Posterior cingulate gyrus (tissue), 11 donors: ENCODE measurements at regions of chr15 and their contacts with region 1.

Region 1: GRCh38 chr15:80058851-80059785 is at the start of gene ZFAND6:
- DNase-seq: peak; percentile 91 to 99 (median 95)

Region 2: GRCh38 chr15:79896637-79897379 is 162.3 kb before region 1 on chr15 and contains the start of gene MTHFS:
- intact Hi-C with region 1: loop called (anchors 10 kb)
- DNase-seq: peak; percentile 43 to 92 (median 60)

Region 3: GRCh38 chr15:80152180-80152845 is 93.2 kb after region 1 on chr15:
- intact Hi-C with region 1: loop called (anchors 5 kb)
- DNase-seq: peak; percentile 51 to 94 (median 76)

Region 4: DNA sequence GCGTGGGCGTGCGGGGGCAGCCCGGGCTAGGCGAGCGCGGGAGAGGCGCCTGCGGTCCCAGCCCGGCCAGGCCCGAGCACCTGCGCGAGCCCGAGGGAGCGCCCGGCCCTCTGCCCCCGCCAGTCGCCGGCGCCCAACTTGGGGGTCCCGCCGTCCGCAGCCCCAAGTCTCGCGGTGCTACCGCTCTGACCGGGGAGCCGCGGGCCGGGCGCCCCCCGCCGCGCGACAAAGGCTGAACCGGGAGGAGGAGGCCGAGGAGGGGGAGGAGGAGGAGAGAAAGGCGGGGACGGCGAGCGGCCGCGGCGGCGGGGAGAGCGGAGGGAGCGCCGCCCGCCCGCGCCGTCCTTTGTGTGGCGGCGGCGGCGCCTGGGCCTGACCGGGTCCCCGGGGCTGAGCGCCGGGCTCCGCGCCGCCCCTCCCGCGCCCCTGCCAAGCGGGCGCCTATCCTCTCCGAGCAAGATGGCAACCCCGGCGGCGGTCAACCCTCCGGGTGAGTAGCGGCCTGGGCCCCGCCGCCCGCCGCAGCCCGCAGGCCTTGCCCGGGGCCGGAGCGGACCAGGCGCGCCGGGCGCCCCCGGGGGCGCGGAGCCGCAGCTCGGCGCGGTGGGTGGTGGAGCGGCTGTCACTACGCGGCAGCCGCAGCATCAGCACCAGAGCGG is 345.1 kb after region 1 on chr15 and contains the start of gene ARNT2:
- intact Hi-C with region 1: loop called (anchors 10 kb)
- DNase-seq: peak; percentile 37 to 94 (median 59)

Region 5: DNA sequence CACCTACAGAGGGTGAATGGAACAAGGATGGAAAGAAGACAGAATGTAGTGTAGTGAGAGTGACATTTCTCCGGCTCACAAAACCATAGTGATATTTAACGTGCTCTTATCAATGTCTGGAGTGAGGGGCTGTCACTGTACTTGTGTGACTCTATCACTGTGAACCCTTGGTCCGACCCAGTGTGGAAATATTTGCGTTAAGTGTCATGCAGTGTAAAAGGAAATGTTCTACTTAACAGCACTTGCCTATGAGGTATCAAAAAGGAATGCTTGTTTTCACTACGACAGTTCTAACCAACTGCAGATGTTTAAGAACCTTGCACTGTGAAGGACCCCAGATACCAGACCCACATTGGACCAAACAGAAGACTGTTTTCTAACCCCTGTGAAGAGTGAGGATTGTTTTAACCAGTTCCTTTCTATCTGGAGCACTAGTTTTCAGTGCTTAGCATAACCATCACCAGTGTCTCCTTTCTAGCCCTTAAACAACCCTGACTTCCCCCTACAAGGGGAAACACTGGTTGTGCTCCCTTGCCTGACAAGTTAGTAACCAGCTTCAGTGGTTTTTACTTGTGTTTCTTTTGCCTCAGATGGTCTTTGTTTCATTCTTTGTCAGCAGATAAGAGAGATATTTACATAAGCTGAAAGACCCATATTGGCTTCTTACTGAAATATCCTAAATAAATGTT is 491.2 kb after region 1 on chr15:
- intact Hi-C with region 1: no loop called
- DNase-seq: no peak